ENCODE measurements at regions of chr13 and their contacts with region 1.

Region 1: GRCh38 chr13:19601749-19602725 is 31.4 kb upstream of the MPHOSPH8 start:
- DNase-seq: peak; percentile 58
- ATAC-seq: peak; percentile 94
- H3K4me3 ChIP-seq: peak overlapping the region; percentile 68 to 77 (median 77)
- H3K27ac ChIP-seq: peak overlapping the region; percentile 83
- H3K4me1 ChIP-seq: peaks cover 65% of the 10 kb centered on the region
- H3K27me3 ChIP-seq: no peaks in the 10 kb centered on the region
- CTCF ChIP-seq: peak; percentile 39
- EP300 ChIP-seq: no peak
- POLR2A ChIP-seq: peak; percentile 66 to 69
- RAD21 ChIP-seq: peak; percentile 72

Region 2: DNA sequence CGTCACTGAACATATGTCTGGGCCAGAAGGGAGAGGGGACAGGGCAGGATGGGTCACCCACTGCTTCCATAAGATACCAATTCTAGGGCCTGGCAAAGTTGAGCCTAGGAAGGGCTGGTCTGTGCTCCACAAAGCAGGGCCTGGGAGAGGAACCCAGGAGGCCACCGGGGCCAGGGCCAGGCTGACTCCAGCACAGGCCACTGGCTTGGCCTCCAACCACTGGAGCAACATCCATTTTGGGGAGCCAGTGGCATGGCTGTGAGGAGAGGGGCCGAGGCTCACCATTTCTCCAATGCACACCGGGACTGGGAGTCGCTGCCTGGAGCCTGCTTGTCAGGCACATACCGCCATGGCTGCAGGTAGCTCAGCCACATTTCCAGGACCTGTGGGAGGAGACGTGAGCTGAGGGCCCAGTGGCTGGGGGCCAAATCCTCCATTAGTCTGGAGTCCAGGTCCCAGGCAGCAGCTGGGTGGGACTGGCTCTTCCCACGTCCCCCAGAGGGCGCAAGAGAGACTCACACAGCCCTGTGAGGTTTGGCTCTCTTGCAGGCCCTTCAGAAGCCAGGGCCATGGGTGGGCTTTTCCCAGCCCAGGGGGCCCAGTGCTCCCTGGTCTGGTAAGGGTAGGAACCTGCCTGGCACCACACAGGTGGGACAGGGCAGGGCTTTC is 448.1 kb before region 1 on chr13:
- CTCF ChIA-PET with region 1: no interaction called
- POLR2A ChIA-PET with region 1: no interaction called
- in situ Hi-C with region 1: loop called (anchors 10 kb)
- intact Hi-C with region 1: no loop called
- DNase-seq: peak; percentile 7
- ATAC-seq: peak; percentile 83
- H3K4me3 ChIP-seq: no peak overlapping the region
- H3K27ac ChIP-seq: no peak overlapping the region
- H3K4me1 ChIP-seq: no peaks in the 10 kb centered on the region
- H3K27me3 ChIP-seq: no peaks in the 10 kb centered on the region
- CTCF ChIP-seq: peak; percentile 65
- EP300 ChIP-seq: no peak
- POLR2A ChIP-seq: no peak
- RAD21 ChIP-seq: no peak

Region 3: DNA sequence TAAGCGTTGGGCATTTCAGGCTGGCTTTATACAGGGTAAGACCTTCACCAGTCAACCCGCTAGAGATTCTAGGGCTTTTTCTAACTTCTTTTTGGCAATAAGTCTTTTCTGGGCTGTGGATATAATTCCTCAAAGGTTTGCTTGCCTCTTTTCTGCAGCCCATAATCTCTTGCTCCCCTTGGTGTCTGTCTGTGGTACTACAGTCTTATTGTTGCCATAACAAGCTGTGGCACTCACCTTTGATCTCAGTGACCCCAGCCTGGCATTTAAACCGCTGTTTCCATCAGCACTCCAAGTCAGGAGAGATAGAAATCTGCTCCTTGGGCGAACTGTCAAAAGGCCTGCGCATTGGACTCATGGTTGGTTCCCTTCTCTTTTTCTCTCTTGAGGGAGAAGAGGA is 16.9 kb after region 1 on chr13:
- CTCF ChIA-PET with region 1: interaction called, 14 read pairs
- POLR2A ChIA-PET with region 1: interaction called, 9 read pairs
- in situ Hi-C with region 1: no loop called
- intact Hi-C with region 1: no loop called
- DNase-seq: peak; percentile 79
- ATAC-seq: peak; percentile 95
- H3K4me3 ChIP-seq: no peak overlapping the region
- H3K27ac ChIP-seq: peak overlapping the region; percentile 17
- H3K4me1 ChIP-seq: peaks cover 36% of the 10 kb centered on the region
- H3K27me3 ChIP-seq: no peaks in the 10 kb centered on the region
- CTCF ChIP-seq: peak; percentile 79
- EP300 ChIP-seq: no peak
- POLR2A ChIP-seq: no peak
- RAD21 ChIP-seq: peak; percentile 64

Region 4: GRCh38 chr13:19633479-19634255 is 31.6 kb after region 1 on chr13 and contains the start of gene MPHOSPH8:
- CTCF ChIA-PET with region 1: no interaction called
- POLR2A ChIA-PET with region 1: interaction called, 14 read pairs
- in situ Hi-C with region 1: no loop called
- intact Hi-C with region 1: loop called (anchors 1 kb)
- DNase-seq: peak; percentile 88
- ATAC-seq: peak; percentile 98
- H3K4me3 ChIP-seq: peak within 1 kb of the TSS; percentile 88 to 92 (median 88)
- H3K27ac ChIP-seq: peak within 1 kb of the TSS; percentile 77
- H3K4me1 ChIP-seq: peaks cover 30% of the 10 kb centered on the region
- H3K27me3 ChIP-seq: peaks cover 0 to 4% of the 10 kb centered on the region in 2 experiments; a peak in 1 of 5 replicates
- CTCF ChIP-seq: no peak; the same call in 1 of the 2 replicates
- EP300 ChIP-seq: no peak
- POLR2A ChIP-seq: peak; percentile 53 to 69
- RAD21 ChIP-seq: no peak
- total RNA-seq, gene MPHOSPH8: 20.9 and 27.6 TPM in 2 replicates

Region 5: GRCh38 chr13:19726611-19727010 is 124.6 kb after region 1 on chr13:
- CTCF ChIA-PET with region 1: no interaction called
- POLR2A ChIA-PET with region 1: no interaction called
- in situ Hi-C with region 1: no loop called
- intact Hi-C with region 1: no loop called
- DNase-seq: no peak
- ATAC-seq: no peak
- H3K4me3 ChIP-seq: no peak overlapping the region
- H3K27ac ChIP-seq: no peak overlapping the region
- H3K4me1 ChIP-seq: no peaks in the 10 kb centered on the region
- H3K27me3 ChIP-seq: no peaks in the 10 kb centered on the region
- CTCF ChIP-seq: no peak
- EP300 ChIP-seq: no peak
- POLR2A ChIP-seq: no peak
- RAD21 ChIP-seq: no peak

Measured in HepG2 (cell line).